AG04449 (cell line): ENCODE measurements at regions of chr14 and their contacts with region 1.

Region 1: GRCh38 chr14:28608851-28609828 is 157.4 kb upstream of the FOXG1 start:
- DNase-seq: peak; percentile 7
- H3K4me3 ChIP-seq: no peak overlapping the region
- CTCF ChIP-seq: peak; percentile 79

Region 2: DNA sequence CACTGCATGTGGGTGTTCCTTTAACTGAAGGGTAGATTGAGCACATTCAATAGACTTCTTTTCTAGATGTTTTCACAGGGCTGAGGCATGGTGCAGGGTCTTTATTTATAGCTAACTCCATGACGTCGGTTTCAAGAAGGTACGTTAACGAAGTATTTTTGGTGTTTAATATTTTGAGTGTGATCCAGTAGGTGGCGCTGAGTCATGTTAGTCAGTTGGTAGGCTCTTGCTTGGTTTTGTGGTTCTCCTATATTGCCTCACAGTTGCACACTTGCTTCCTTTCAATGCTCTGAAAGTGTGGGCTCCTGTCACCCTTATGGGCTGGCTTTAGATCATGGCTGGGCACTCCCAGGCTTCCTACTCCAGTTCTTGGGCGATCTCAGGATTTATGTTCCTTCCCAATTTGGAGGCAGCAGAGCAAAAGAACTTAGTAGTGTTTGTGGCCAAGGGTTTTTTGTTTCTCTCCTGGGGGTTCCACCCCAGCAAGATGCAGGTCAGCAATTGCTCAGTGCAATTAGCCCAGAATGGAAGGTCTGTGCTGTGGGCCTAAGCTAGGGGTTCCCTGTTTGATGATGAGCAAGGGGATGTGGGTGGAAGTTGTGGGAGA is 314.2 kb before region 1 on chr14:
- CTCF ChIA-PET with region 1: interaction called, 10 read pairs
- POLR2A ChIA-PET with region 1: no interaction called
- DNase-seq: no peak
- H3K4me3 ChIP-seq: no peak overlapping the region
- CTCF ChIP-seq: peak; percentile 35